Activated CD4-positive, alpha-beta T cell treated with anti-CD3 and anti-CD28 coated beads, Interleukin-2, amount 10 ng/mL, durations not matched to agents 7 days and 5 days (primary cell): ENCODE measurements at regions of chr15 and their contacts with region 1.

Region 1: GRCh38 chr15:73633111-73633990 is at the start of gene NPTN:
- DNase-seq: peak; percentile 98
- H3K4me3 Mint-ChIP-seq: peak within 1 kb of the TSS; percentile 86
- H3K27ac Mint-ChIP-seq: peak within 1 kb of the TSS; percentile 80
- H3K4me1 Mint-ChIP-seq: peaks cover 42% of the 10 kb centered on the region
- H3K27me3 Mint-ChIP-seq: peaks cover 27% of the 10 kb centered on the region
- total RNA-seq, gene NPTN: 41.4 to 50.6 TPM

Region 2: DNA sequence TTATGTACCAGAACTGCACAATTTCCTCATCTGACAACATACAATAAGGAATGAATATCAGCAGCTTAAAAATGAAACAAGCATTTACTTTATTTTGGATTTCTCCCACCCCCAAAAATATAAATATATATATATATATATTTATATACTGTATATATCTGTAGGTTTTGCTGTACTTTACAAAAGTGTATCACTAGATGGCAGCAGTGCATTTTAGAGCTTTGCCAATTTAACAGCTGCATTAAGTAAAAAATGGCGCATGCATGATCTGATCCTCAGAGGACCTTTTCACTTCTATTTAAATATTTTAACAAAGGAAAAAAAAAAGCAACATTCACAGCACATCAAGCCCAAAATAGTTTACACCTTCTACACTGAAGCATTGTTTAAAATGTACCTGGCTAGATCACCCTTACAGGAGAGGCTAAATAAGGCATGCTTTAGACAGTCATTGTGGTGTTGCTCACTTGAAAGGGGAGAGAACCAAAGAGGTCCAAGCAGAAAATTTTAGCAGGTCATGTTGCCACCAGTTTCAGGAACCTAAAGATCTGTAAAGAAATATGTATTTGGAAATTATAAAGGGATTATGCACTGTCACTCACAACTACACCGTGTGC is 72.7 kb before region 1 on chr15:
- CTCF ChIA-PET with region 1: interaction called, 15 read pairs
- POLR2A ChIA-PET with region 1: no interaction called
- DNase-seq: peak; percentile 53
- H3K4me3 Mint-ChIP-seq: no peak overlapping the region
- H3K27ac Mint-ChIP-seq: no peak overlapping the region
- H3K4me1 Mint-ChIP-seq: peaks cover 13% of the 10 kb centered on the region
- H3K27me3 Mint-ChIP-seq: no peaks in the 10 kb centered on the region

Region 3: DNA sequence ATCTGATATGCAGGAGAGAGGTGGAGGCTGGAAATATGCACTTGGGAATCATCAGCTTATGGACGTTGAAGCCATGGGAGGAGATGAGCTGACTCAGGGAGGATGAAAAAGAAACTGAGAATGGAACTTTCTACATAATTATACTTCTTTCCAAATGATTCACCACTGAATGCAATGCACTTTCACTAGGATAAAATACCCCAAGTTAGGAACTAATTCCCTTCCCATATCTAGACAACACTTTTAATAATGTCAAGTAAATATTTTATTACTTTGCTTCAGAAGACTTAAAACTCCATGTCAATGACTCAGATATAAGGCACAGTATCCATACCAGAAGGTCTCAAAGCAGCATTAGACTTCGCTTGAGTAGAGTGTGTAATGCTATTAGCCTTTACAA is 24.4 kb before region 1 on chr15:
- CTCF ChIA-PET with region 1: interaction called, 12 read pairs
- POLR2A ChIA-PET with region 1: interaction called, 4 read pairs
- DNase-seq: no peak
- H3K4me3 Mint-ChIP-seq: no peak overlapping the region
- H3K27ac Mint-ChIP-seq: no peak overlapping the region
- H3K4me1 Mint-ChIP-seq: peaks cover 27% of the 10 kb centered on the region
- H3K27me3 Mint-ChIP-seq: no peaks in the 10 kb centered on the region

Region 4: GRCh38 chr15:73660455-73660854 is 27.1 kb after region 1 on chr15:
- CTCF ChIA-PET with region 1: no interaction called
- POLR2A ChIA-PET with region 1: no interaction called
- DNase-seq: no peak
- H3K4me3 Mint-ChIP-seq: no peak overlapping the region
- H3K27ac Mint-ChIP-seq: no peak overlapping the region
- H3K4me1 Mint-ChIP-seq: peaks cover 3% of the 10 kb centered on the region
- H3K27me3 Mint-ChIP-seq: peaks cover 29% of the 10 kb centered on the region

Region 5: DNA sequence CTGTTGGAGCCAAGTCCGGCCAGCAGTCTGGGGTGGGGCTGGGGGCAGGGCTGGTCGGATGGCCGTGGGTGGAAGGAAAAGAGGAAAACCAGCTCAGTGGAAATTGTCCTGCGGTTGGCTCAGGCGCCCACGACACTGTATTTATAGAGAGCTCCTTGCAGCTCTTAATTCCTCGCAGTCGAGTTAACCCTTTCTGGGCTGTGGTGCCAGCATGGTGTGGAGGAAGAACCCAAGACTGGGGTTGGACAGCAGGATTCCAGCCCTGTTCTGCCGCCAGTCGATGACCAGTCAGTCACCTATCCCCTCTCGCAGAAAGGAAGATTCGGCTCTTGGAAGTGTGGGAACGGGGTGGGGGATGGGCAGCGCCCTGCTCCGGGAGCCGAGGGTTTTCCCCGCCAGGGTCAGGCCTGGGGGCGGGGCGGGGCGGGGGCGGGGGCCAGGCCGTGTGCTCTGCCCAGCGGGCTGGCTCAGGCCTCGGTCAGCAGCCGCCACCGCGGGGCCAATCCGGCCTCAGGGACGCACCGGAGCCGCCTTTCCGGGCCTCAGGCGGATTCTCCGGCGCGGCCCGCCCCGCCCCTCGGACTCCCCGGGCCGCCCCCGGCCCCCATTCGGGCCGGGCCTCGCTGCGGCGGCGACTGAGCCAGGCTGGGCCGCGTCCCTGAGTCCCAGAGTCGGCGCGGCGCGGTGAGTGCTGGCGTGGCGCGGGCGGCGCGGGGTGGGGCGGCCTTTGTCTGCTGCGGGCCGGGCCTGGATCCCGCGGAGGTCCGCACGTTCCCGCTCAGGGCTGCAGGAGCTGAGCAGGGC is 50.6 kb after region 1 on chr15 and contains the start of gene CD276:
- CTCF ChIA-PET with region 1: interaction called, 12 read pairs
- POLR2A ChIA-PET with region 1: no interaction called
- DNase-seq: no peak
- H3K4me3 Mint-ChIP-seq: no peak within 1 kb of the TSS
- H3K27ac Mint-ChIP-seq: no peak within 1 kb of the TSS
- H3K4me1 Mint-ChIP-seq: peaks cover 3% of the 10 kb centered on the region
- H3K27me3 Mint-ChIP-seq: peaks cover 68% of the 10 kb centered on the region
- total RNA-seq, gene CD276: 0.37 to 0.96 TPM

Region 6: DNA sequence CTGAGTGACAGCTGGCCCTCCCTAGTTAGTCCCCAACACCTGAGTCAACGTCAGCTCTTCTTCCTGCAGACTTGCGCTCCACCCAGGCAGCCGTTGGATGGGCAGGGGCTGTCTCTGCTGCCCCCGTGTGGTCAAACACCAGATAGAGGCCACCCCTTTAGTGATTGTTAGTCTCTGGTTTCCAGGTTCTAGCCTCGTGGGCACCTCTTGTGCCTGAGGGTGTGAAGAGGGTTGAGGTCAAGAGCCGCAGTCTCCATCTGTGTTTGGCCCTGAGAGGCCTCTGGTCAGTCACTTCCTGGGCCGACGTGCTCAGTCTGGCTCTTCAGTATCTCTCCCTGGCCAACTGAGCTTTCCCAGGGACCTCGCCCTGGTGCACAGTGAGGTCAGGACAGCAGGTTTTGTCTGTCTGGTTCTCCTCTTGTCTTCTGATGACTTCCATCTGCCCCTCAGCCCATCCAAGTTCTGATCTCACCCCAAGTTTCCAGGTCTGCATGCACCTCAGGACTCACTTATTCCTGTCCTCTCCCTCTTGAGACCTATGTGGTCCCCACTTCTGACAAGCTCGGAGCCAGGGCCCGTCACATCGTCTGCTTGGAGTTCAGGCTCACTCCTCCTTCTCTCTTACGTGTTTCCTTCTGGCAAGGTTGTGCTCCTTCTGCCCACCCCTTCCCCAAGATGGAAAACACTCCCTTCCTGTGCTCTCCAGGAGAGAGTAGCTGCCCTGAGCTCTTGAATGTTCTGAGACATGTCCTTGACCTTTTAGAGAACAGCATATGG is 71.7 kb after region 1 on chr15:
- CTCF ChIA-PET with region 1: interaction called, 94 read pairs
- POLR2A ChIA-PET with region 1: no interaction called
- DNase-seq: peak; percentile 74
- H3K4me3 Mint-ChIP-seq: no peak overlapping the region
- H3K27ac Mint-ChIP-seq: no peak overlapping the region
- H3K4me1 Mint-ChIP-seq: peaks cover 4% of the 10 kb centered on the region
- H3K27me3 Mint-ChIP-seq: peaks cover 5% of the 10 kb centered on the region

Region 7: DNA sequence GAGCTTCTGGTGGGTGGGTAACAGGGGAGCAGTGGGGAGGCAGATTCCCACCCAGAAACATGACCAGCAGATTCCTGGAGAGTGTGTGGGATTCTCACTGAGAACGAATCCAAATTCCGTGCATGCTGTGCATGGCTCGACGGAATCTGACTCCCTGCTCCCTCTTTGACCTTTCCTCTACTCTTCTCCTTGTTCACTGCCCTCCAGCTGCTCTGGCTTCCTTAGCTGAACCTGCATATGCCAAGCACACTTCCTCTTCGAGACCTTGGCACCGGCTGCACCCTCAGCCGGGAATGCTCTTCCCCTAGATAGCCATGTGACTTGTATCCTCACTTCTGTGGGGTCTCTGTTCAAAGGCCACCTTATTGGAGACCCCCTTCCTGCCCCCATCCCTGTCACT is 113.5 kb after region 1 on chr15:
- CTCF ChIA-PET with region 1: no interaction called
- POLR2A ChIA-PET with region 1: no interaction called
- DNase-seq: no peak
- H3K4me3 Mint-ChIP-seq: no peak overlapping the region
- H3K27ac Mint-ChIP-seq: no peak overlapping the region
- H3K4me1 Mint-ChIP-seq: no peaks in the 10 kb centered on the region
- H3K27me3 Mint-ChIP-seq: peaks cover 35% of the 10 kb centered on the region